ENCODE measurements at regions of chr1 and their contacts with region 1.

Region 1: GRCh38 chr1:12619792-12620487 is 1.9 kb upstream of the DHRS3 start:
- DNase-seq: peak; percentile 55 to 79
- H3K4me3 ChIP-seq: peak overlapping the region; percentile 91
- H3K27ac ChIP-seq: peak overlapping the region; percentile 90
- H3K4me1 ChIP-seq: peaks cover 14% of the 10 kb centered on the region
- H3K27me3 ChIP-seq: no peaks in the 10 kb centered on the region
- CTCF ChIP-seq: peak; percentile 90

Region 2: DNA sequence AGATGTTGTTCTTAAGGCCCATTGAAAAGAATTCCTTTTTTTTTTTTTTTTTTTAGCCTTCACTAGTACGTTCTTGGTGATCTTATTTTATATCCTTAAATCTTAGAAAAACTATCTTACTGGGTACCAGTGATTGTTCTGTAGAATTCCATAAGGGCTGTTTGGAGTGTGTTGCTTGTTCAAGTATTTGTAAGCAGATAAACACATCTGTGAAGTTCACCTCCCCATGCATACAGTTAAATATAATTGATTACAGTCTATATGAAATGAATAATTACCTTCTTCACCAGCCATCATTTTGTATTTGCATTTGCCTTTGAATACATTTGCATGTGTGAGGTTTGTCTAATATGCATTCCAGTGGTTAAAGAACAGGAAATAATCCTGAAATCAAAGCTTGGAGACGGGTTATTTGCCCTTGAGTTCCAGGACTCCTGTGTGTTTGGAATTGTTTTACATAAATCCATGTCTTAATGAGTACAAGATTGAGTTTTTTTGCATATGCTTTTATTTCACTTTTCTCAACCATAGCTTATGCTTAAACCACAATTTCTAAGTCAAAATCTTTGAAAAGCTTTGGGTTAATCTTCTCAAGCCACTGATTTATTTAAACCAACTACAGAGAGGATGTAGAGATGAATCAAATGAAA is 317.0 kb before region 1 on chr1:
- CTCF ChIA-PET with region 1: no interaction called
- POLR2A ChIA-PET with region 1: no interaction called
- intact Hi-C with region 1: no loop called
- DNase-seq: no peak
- H3K4me3 ChIP-seq: no peak overlapping the region
- H3K27ac ChIP-seq: no peak overlapping the region
- H3K4me1 ChIP-seq: no peaks in the 10 kb centered on the region
- H3K27me3 ChIP-seq: no peaks in the 10 kb centered on the region
- CTCF ChIP-seq: no peak

Region 3: GRCh38 chr1:12314333-12314903 is 305.5 kb before region 1 on chr1:
- CTCF ChIA-PET with region 1: no interaction called
- POLR2A ChIA-PET with region 1: interaction called, 11 read pairs
- intact Hi-C with region 1: loop called (anchors 1 kb)
- DNase-seq: no peak
- H3K4me3 ChIP-seq: no peak overlapping the region
- H3K27ac ChIP-seq: no peak overlapping the region
- H3K4me1 ChIP-seq: peaks cover 10% of the 10 kb centered on the region
- H3K27me3 ChIP-seq: no peaks in the 10 kb centered on the region
- CTCF ChIP-seq: peak; percentile 72

Region 4: DNA sequence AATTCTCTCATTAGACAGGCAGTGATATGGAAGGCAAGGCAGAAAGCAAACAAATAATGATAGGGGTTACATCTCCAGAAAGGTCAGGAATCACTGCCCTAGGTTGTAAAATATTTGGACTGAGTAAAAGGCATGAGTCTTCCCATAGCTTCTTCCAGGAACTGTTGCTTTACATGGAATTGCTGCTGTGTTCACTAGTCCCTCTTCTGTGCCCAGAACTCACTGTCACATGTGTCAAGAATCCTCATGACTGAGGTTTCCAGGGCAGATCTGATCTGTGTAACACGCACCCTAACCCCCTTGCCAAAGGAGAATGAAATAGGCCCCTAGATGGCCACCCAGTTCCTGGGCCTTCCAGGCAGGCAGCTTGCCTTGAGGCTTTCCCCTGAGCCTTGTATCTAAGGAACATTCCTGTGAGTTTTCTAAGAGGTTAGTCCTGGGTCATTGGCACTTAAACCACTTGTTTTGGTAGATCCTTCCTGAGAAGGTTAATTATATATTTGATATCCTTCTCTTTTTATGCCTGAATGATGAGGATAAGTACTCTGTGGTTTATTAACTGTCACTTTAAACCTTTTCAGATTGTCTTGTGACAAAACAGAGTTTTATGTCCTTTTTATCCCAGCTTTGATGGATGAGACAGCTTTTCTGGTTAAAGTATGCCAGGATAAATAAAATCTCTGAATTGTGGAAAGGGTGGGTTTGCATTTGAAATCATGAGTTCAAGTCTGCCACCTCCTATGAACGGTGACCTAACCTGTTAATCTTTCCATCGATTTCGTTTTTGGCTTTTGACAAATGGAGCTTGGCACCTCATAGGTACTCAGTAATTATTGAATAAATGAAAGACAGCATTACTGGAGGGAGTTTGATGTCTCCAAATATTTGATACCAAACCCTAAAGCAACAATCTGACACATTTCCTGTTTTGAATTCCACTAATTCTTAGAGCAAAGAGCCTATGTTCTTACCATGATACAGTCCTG is 165.2 kb before region 1 on chr1:
- CTCF ChIA-PET with region 1: no interaction called
- POLR2A ChIA-PET with region 1: interaction called, 35 read pairs
- intact Hi-C with region 1: no loop called
- DNase-seq: peak; percentile 52 to 81
- H3K4me3 ChIP-seq: no peak overlapping the region
- H3K27ac ChIP-seq: peak overlapping the region; percentile 55
- H3K4me1 ChIP-seq: peaks cover 42% of the 10 kb centered on the region
- H3K27me3 ChIP-seq: no peaks in the 10 kb centered on the region
- CTCF ChIP-seq: no peak

Region 5: GRCh38 chr1:12549460-12550349 is 70.2 kb before region 1 on chr1:
- CTCF ChIA-PET with region 1: no interaction called
- POLR2A ChIA-PET with region 1: interaction called, 4 read pairs
- intact Hi-C with region 1: loop called (anchors 1 kb)
- DNase-seq: peak; percentile 94
- H3K4me3 ChIP-seq: peak overlapping the region; percentile 17; the same call in 1 of the 2 replicates
- H3K27ac ChIP-seq: peak overlapping the region; percentile 69
- H3K4me1 ChIP-seq: peaks cover 22% of the 10 kb centered on the region
- H3K27me3 ChIP-seq: no peaks in the 10 kb centered on the region
- CTCF ChIP-seq: no peak

Region 6: GRCh38 chr1:12604114-12604874 is 15.6 kb before region 1 on chr1:
- CTCF ChIA-PET with region 1: interaction called, 4 read pairs
- POLR2A ChIA-PET with region 1: interaction called, 5 read pairs
- intact Hi-C with region 1: loop called (anchors 1 kb)
- DNase-seq: peak; percentile 66 to 94
- H3K4me3 ChIP-seq: no peak overlapping the region; the same call in 1 of the 2 replicates
- H3K27ac ChIP-seq: peak overlapping the region; percentile 68
- H3K4me1 ChIP-seq: peaks cover 56% of the 10 kb centered on the region
- H3K27me3 ChIP-seq: no peaks in the 10 kb centered on the region
- CTCF ChIP-seq: no peak

Measured in PC-9 (cell line).